OCI-LY7 (cell line): ENCODE measurements at regions of chr2 and their contacts with region 1.

Region 1: GRCh38 chr2:216108967-216109921 is at the start of gene XRCC5:
- DNase-seq: peak; percentile 98
- H3K4me3 ChIP-seq: peak within 1 kb of the TSS; percentile 91
- H3K27ac ChIP-seq: peak within 1 kb of the TSS; percentile 74
- H3K4me1 ChIP-seq: peaks cover 48% of the 10 kb centered on the region
- CTCF ChIP-seq: no peak
- total RNA-seq, gene XRCC5: 174 and 180 TPM in 2 replicates

Region 2: GRCh38 chr2:216083464-216084281 is 25.6 kb before region 1 on chr2:
- CTCF ChIA-PET with region 1: interaction called, 4 read pairs
- POLR2A ChIA-PET with region 1: interaction called, 10 read pairs
- intact Hi-C with region 1: no loop called
- DNase-seq: no peak
- H3K4me3 ChIP-seq: no peak overlapping the region
- H3K27ac ChIP-seq: peak overlapping the region; percentile 59
- H3K4me1 ChIP-seq: peaks cover 36% of the 10 kb centered on the region
- CTCF ChIP-seq: no peak

Region 3: DNA sequence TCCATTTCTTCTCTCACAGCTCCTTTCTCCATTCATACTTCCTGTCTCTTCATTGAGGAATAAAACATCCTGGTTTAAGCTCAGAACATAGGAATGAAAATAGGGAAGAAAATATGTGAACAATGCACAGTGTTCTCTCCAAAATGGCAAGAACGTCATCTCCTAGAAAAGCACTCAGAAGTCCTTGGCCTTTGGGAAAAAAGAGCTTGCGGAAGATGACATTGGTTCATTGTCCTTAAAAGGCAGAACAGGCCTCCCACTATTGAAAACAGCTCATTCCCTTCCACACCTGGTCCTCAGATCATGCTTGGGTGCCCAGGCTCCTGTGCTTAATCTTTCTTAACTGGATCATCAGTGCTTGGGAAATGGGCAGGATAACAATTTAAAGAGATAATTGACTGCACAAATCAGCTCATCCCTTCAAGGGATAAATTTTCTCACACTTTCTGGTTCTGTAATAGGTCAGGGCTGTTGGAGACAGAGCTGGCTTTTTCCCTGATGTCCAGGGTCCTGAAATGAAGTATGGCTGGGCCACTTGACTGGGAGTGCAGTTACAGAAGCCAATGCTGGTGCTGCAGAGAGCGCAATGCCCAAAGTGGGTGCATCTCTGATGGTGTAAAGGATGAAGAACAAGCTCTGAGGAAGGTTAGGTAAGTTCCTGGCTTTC is 193.9 kb after region 1 on chr2:
- CTCF ChIA-PET with region 1: no interaction called
- POLR2A ChIA-PET with region 1: interaction called, 13 read pairs
- intact Hi-C with region 1: no loop called
- DNase-seq: no peak
- H3K4me3 ChIP-seq: no peak overlapping the region
- H3K27ac ChIP-seq: no peak overlapping the region
- H3K4me1 ChIP-seq: no peaks in the 10 kb centered on the region
- CTCF ChIP-seq: no peak

Region 4: GRCh38 chr2:216412022-216412999 is 303.1 kb after region 1 on chr2 and contains the start of gene SMARCAL1:
- CTCF ChIA-PET with region 1: no interaction called
- POLR2A ChIA-PET with region 1: interaction called, 4 read pairs
- intact Hi-C with region 1: loop called (anchors 1 kb)
- DNase-seq: peak; percentile 98
- H3K4me3 ChIP-seq: peak within 1 kb of the TSS; percentile 71
- H3K27ac ChIP-seq: peak within 1 kb of the TSS; percentile 29
- H3K4me1 ChIP-seq: peaks cover 20% of the 10 kb centered on the region
- CTCF ChIP-seq: no peak
- total RNA-seq, gene SMARCAL1: 11.0 and 12.2 TPM in 2 replicates

Region 5: DNA sequence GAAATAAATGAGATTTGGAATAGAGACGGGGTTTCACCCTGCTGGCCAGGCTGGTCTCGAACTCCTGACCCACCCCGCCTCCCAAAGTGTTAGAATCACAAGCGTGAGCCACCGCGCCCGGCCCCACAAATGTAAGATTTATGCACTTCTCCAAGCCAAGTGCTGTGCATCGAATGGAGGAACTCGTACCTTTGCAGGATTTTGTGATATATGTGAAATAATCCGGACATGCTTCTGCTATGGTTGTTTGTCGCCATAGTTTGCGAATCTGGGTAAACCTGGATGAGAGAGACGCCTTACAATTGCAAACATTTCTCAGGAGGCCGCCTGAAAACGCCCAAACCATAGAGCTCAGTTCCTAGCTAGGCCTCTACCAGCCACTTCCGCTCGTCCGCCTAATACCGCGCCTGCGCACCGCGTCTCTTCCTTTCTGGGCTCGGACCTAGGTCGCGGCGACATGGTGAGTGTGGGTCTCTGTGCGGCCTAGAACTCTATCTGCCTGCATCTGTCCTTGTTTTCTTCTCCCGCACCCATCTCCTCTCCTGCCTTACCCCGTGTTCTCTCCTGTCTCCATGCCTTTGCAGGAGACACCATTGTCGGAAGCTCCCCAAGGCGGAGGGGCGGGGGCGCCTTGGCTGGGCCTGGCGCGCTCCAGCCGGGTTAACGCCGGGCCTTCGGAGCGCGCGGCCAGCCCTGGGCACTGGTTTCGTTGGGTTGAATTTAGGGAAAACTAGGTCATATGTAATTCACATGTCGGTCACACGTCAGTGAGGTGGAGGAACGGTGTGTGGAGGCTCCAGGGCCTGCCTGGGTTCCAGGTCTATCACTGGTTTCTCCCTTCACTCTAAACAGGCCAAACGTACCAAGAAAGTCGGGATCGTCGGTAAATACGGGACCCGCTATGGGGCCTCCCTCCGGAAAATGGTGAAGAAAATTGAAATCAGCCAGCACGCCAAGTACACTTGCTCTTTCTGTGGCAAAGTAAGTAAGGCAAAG is 389.5 kb after region 1 on chr2 and contains the start of gene RPL37A:
- CTCF ChIA-PET with region 1: no interaction called
- POLR2A ChIA-PET with region 1: no interaction called
- intact Hi-C with region 1: loop called (anchors 2 kb)
- DNase-seq: peak; percentile 95
- H3K4me3 ChIP-seq: peak within 1 kb of the TSS; percentile 94
- H3K27ac ChIP-seq: peak within 1 kb of the TSS; percentile 67
- H3K4me1 ChIP-seq: peaks cover 47% of the 10 kb centered on the region
- CTCF ChIP-seq: no peak; the same call in 1 of the 2 replicates
- total RNA-seq, gene RPL37A: 4,020 and 4,194 TPM in 2 replicates

Region 6: DNA sequence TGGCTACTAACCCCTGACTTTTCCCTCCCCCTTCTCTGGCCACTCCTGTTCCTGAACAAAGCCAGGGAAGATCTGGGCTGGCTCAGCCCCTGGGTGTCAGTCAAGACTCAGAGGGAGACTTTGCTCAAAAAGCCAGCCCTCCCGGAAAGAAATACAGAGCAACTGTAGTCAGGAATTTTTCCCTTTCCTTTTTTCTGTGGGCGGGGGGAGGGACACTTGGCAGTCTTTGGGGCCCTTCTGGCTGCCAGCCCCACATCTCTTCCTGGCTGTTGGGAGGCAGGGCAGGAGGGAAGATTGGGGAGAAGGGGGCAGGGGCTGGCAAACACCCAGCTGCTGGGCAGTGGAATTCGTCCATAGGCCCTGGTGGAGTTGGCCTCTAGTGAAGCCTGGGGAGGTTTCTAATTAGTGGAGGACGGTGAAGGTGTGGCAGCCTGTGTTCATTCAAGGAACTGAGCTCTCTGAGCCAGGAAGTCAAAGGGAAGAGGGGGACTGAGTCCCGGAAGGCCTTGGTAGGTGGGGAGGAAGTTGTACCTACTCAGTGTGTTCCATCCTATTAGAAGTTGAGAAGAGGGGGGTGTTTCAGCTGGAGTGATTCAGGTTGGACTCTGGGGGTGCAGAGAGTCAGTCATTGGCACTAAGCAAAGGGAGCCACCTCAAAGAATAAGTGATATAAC is 534.9 kb after region 1 on chr2:
- CTCF ChIA-PET with region 1: no interaction called
- POLR2A ChIA-PET with region 1: no interaction called
- intact Hi-C with region 1: no loop called
- DNase-seq: no peak
- H3K4me3 ChIP-seq: no peak overlapping the region
- H3K27ac ChIP-seq: no peak overlapping the region
- H3K4me1 ChIP-seq: peaks cover 5% of the 10 kb centered on the region
- CTCF ChIP-seq: no peak